ENCODE measurements at regions of chr2 and their contacts with region 1.

Region 1: GRCh38 chr2:85288244-85288725 is 39.5 kb downstream of the TGOLN2 start:
- DNase-seq: peak; percentile 95
- H3K4me3 ChIP-seq: no peak overlapping the region
- H3K27ac ChIP-seq: peak overlapping the region; percentile 93
- H3K4me1 ChIP-seq: peaks cover 33% of the 10 kb centered on the region
- H3K27me3 ChIP-seq: no peaks in the 10 kb centered on the region
- CTCF ChIP-seq: no peak

Region 2: DNA sequence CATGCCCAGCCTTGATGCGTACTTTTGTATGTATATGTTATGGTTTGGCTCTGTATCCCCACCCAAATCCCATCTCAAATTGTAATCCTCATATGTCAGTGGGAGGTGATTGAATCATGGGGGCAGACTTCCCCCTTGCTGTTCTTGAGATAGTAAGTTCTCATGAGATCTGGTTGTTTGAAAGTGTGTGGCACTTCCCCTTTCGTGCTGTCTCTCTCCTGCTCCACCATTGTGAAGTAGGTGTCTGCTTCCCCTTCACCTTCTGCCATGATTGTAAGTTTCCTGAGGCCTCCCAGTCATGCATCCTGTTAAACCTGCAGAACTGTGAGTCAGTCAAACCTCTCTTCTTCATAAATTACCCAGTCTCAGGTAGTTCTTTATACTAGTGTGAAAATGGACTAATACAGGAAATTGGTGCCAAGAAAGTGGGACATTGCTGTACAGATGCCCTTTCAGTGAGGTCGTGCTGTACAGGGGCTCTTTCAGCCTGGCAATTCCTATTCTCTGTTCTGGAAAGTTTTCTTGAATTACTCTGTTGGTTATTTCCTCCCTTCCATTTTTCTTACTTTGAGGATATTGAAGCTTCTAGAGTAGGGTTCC is 279.2 kb before region 1 on chr2:
- CTCF ChIA-PET with region 1: no interaction called
- dilution Hi-C with region 1: no loop called
- in situ Hi-C with region 1: no loop called
- intact Hi-C with region 1: no loop called
- DNase-seq: no peak
- H3K4me3 ChIP-seq: no peak overlapping the region
- H3K27ac ChIP-seq: peak overlapping the region; percentile 49
- H3K4me1 ChIP-seq: peaks cover 22% of the 10 kb centered on the region
- H3K27me3 ChIP-seq: no peaks in the 10 kb centered on the region
- CTCF ChIP-seq: no peak

Region 3: DNA sequence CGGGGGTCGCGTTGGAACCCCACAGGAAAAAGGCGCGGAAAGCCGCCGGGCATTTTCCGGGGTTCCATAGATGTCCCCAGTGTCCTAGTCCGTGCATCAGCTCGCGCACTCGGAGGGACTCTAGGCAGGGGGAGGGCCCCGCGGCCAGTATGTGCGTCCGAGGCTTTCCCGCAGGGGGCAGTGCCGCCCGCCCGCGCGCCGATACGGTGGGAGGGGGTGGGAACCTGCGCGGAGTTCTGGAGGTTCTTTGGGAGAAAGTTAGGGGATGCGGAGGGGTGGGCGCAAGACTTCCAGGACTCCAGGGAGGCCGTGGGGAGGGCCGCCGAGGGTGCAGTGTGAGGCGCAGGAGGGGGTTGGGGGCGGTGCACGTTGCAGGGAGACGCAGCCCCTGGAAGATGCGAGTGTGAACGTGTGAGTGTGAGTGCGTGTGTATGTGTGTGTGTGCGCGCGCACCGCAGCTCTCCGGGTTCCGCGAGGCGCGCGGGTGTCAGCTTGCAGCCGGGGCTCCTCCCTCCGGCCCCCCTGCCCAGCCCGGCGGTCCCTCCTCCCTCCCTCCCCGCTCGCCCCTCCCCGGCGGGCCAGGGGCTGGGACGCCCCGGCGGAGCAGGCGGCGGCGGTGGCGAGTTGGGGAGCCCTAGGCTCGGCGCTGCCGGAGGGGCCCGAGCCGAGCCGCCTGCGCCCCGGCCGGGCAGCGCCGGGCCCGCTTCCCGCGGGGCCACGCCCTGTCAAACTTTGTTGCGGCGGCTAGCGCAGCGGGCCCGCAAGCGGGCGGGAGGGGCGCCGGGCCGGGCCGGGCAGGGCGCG is 155.2 kb before region 1 on chr2 and contains the start of gene TCF7L1:
- CTCF ChIA-PET with region 1: no interaction called
- dilution Hi-C with region 1: no loop called
- in situ Hi-C with region 1: loop called in 1 of 2 experiments (anchors 10 kb)
- intact Hi-C with region 1: loop called (anchors 1 kb)
- DNase-seq: peak; percentile 86
- H3K4me3 ChIP-seq: peak within 1 kb of the TSS; percentile 89 to 98 (median 97)
- H3K27ac ChIP-seq: peak within 1 kb of the TSS; percentile 67
- H3K4me1 ChIP-seq: peaks cover 18% of the 10 kb centered on the region
- H3K27me3 ChIP-seq: no peaks in the 10 kb centered on the region
- CTCF ChIP-seq: peak; percentile 57 to 82
- total RNA-seq, gene TCF7L1: 6.3 to 26.4 TPM

Region 4: GRCh38 chr2:85181134-85181631 is 107.1 kb before region 1 on chr2:
- CTCF ChIA-PET with region 1: no interaction called
- dilution Hi-C with region 1: no loop called
- in situ Hi-C with region 1: no loop called
- intact Hi-C with region 1: loop called (anchors 10 kb)
- DNase-seq: no peak
- H3K4me3 ChIP-seq: no peak overlapping the region
- H3K27ac ChIP-seq: no peak overlapping the region
- H3K4me1 ChIP-seq: peaks cover 10% of the 10 kb centered on the region
- H3K27me3 ChIP-seq: no peaks in the 10 kb centered on the region
- CTCF ChIP-seq: peak; percentile 3 to 28

Region 5: GRCh38 chr2:85243101-85244072 is 44.9 kb before region 1 on chr2:
- CTCF ChIA-PET with region 1: no interaction called
- dilution Hi-C with region 1: no loop called
- in situ Hi-C with region 1: no loop called
- intact Hi-C with region 1: no loop called
- DNase-seq: no peak
- H3K4me3 ChIP-seq: no peak overlapping the region
- H3K27ac ChIP-seq: no peak overlapping the region
- H3K4me1 ChIP-seq: peaks cover 16% of the 10 kb centered on the region
- H3K27me3 ChIP-seq: no peaks in the 10 kb centered on the region
- CTCF ChIP-seq: peak; percentile 23 to 37

Region 6: DNA sequence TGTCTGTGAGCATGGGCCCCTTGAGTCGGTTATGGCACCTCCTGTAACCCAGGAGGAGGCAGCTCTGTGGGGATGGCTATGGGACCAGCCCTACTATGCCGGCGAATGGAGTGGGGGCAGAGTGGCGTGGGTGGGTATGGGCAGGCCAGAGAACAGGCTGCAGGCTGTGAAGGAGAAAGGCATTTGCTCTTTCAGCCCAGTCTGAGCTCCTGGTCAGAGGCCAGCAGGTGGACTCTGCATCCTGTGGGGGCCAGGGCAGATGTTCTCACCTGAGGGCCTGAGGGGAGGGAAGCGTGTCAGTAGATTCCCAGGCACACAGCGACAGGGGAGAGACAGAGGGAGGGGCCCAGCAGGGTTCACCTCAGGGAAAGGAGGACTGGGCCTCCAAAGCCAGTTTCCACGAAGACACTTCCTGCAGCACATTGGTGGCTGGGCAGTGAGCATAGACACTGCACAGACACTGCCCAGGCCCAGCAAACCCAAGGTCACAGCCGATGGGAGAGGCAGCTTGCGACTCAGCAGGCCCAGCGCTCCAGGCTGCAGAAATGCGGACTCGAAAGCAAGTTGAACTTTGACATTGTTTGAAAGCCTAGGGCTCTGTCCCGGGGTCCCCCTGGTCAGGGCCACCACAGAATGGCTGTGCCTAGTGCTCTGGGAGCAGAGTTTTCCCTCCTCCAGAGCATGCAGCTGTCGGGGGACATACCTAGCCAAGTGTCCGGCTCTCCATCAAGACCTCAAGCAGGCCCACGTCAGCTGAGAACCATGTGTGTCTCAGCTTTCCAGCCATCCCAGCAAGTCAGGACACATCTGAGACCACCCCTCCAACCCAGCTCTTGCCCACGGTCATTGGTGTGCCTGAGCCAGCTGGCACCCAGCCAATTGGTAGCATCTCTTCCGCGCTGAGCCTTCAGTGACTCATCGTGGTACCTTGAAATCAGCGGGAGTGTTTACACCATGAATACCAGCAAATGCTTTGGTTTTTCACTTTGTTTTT is 14.2 kb before region 1 on chr2:
- CTCF ChIA-PET with region 1: no interaction called
- dilution Hi-C with region 1: no loop called
- in situ Hi-C with region 1: no loop called
- intact Hi-C with region 1: loop called (anchors 2 kb)
- DNase-seq: peak; percentile 96
- H3K4me3 ChIP-seq: no peak overlapping the region
- H3K27ac ChIP-seq: peak overlapping the region; percentile 23
- H3K4me1 ChIP-seq: peaks cover 49% of the 10 kb centered on the region
- H3K27me3 ChIP-seq: no peaks in the 10 kb centered on the region
- CTCF ChIP-seq: no peak